Transverse colon (tissue), 4 donors: ENCODE measurements at regions of chr10 and their contacts with region 1.

Region 1: DNA sequence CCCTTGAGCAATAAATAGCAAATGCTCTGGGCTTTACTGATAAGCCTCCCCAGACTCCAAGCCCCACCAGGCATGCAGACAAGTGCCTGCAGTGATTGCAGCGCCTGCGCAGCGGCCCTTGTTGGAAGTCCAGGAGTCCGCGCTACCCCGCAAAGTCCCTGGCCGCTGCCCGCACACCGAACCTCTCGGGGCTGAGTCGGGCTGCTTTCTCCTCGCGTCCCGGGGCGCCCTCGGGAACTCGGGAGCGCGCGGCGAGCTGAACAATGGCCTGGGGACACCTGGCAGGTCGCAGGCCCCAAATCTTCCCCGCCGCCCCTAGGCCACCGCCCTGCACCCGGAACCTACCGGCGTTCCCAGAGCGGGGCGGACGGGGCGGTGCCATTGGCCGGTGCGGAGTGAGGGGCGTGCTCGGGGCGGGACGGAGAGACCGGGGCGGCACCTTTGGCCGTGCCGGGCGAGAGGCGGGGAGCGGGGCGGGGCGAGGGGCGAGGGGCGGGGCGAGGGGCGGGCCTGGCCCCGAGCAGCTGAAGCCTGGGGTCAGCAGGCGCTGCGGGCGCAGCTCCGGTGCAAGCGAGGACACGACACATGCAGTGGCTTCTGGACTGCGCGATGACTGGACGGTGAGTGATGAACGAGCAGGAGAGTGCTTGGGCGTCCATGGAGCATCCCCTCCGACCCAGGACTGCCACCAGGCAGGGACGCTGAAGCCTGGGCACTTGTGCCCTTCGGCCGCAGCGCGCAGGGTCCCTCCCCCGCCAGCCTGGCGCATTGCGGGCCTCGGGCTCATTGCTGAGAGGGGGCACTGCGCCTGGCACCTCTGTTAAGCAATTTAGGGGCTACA is at the start of gene RASSF4:
- DNase-seq: peak; percentile 97
- H3K4me3 ChIP-seq: peak within 1 kb of the TSS; percentile 39 to 80 (median 64)
- H3K27ac ChIP-seq: peak within 1 kb of the TSS; percentile 89 to 96 (median 92)
- H3K4me1 ChIP-seq: peaks cover 9 to 46% (median 31%) of the 10 kb centered on the region in 4 donors
- H3K27me3 ChIP-seq: no peaks in the 10 kb centered on the region
- CTCF ChIP-seq: peak in 1 of 5 experiments; percentile 28
- EP300 ChIP-seq: no peak
- POLR2A ChIP-seq: peak; percentile 89
- total RNA-seq, gene RASSF4: 26.8 to 37.8 (median 27.5) TPM

Region 2: GRCh38 chr10:44850356-44850934 is 109.0 kb before region 1 on chr10:
- in situ Hi-C with region 1: no loop called
- intact Hi-C with region 1: no loop called
- DNase-seq: no peak
- H3K4me3 ChIP-seq: no peak overlapping the region
- H3K27ac ChIP-seq: no peak overlapping the region
- H3K4me1 ChIP-seq: no peaks in the 10 kb centered on the region
- H3K27me3 ChIP-seq: no peaks in the 10 kb centered on the region
- CTCF ChIP-seq: no peak
- EP300 ChIP-seq: no peak
- POLR2A ChIP-seq: no peak

Region 3: GRCh38 chr10:44995914-44996636 is 36.6 kb after region 1 on chr10:
- in situ Hi-C with region 1: no loop called
- intact Hi-C with region 1: loop called (anchors 2 kb)
- DNase-seq: no peak
- H3K4me3 ChIP-seq: no peak overlapping the region
- H3K27ac ChIP-seq: peak overlapping the region; percentile 79 to 86 (median 83)
- H3K4me1 ChIP-seq: peaks cover 14 to 49% (median 25%) of the 10 kb centered on the region in 4 donors
- H3K27me3 ChIP-seq: no peaks in the 10 kb centered on the region
- CTCF ChIP-seq: no peak
- EP300 ChIP-seq: no peak
- POLR2A ChIP-seq: peak; percentile 7

Region 4: GRCh38 chr10:45001381-45002148 is 42.1 kb after region 1 on chr10:
- in situ Hi-C with region 1: no loop called
- intact Hi-C with region 1: loop called (anchors 2 kb)
- DNase-seq: peak; percentile 66
- H3K4me3 ChIP-seq: peak overlapping the region; percentile 27 to 63 (median 56)
- H3K27ac ChIP-seq: peak overlapping the region; percentile 90 to 95 (median 94)
- H3K4me1 ChIP-seq: peaks cover 13 to 49% (median 22%) of the 10 kb centered on the region in 4 donors
- H3K27me3 ChIP-seq: no peaks in the 10 kb centered on the region
- CTCF ChIP-seq: peak; percentile 13 to 49 (median 23)
- EP300 ChIP-seq: no peak
- POLR2A ChIP-seq: peak; percentile 39